CD8-positive, alpha-beta memory T cell (primary cell): ENCODE measurements at regions of chr3 and their contacts with region 1.

Region 1: DNA sequence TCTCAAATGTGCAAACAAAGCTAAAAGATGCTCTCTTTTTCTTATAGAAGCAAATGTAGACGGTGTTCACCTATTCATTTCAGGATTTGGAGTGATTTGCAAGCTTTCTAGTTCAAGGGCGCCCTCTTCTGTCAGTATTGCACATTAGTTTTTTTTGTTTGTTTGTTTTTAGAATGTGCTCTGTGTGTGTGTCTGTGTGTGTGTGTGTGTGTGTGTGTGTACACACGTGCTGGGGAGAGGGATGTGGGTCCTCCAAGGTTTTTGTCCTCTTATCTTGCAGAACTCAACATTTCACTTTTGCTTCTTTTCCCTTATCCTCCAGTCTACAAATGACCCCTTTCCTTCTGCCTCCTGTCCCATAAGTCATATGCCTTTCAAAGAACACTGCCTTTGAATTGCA is 23.5 kb downstream of the DNAH1 start:
- DNase-seq: peak; percentile 10 to 72 (median 60)
- H3K4me3 ChIP-seq: no peak overlapping the region
- H3K4me3 Mint-ChIP-seq: no peak overlapping the region
- H3K27ac ChIP-seq: no peak overlapping the region
- H3K27ac Mint-ChIP-seq: peak overlapping the region in 5 of 8 donors; percentile 1 to 62 (median 17)
- H3K4me1 ChIP-seq: no peaks in the 10 kb centered on the region
- H3K4me1 Mint-ChIP-seq: peaks cover 5 to 7% (median 6%) of the 10 kb centered on the region in 3 donors
- H3K27me3 ChIP-seq: no peaks in the 10 kb centered on the region
- H3K27me3 Mint-ChIP-seq: no peaks in the 10 kb centered on the region

Region 2: DNA sequence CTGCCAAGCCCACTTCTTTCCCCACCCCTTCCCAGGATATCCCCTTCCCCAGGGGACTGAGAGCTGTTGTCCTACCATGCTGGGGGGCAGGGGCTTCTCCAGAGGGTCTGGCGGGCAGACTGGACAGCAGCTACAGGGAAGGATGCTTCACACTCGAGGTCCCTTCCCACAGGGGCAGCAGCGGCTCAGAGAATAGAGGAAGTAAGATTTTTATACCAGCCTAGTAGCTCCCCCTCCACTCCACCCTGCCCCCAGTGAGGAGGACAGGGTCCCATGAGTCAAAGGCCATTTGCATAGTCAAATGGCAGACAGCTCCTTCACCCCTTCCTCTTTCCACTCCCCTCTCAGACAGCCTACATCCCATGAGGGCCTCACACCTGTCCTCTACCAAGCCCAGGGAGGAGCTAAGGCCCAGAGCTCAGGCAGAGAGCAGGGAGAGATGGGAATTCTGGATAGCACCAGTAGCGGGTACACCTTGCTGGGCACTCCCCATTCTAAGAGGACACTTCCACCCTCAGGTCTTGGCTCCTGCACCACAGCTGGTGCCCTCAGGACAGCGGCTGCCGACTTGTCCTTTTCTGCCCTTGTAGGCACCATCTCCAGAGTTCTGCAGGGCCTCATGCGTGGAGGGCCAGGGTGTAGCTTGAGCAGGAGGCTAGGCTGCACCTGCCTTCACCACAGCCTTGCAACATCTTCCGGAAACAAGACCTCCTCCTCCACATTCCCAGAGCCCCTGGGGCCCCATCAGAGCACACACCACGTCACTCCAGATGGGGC is 114.0 kb before region 1 on chr3 and contains the start of gene TLR9:
- CTCF ChIA-PET with region 1: interaction called, 115 read pairs
- POLR2A ChIA-PET with region 1: interaction called, 10 read pairs
- DNase-seq: peak in 1 of 5 donors; percentile 49
- H3K4me3 ChIP-seq: peak within 1 kb of the TSS; percentile 39
- H3K4me3 Mint-ChIP-seq: peak within 1 kb of the TSS in 6 of 7 donors; percentile 8 to 56 (median 33)
- H3K27ac ChIP-seq: no peak within 1 kb of the TSS
- H3K27ac Mint-ChIP-seq: peak within 1 kb of the TSS; percentile 56 to 91 (median 75)
- H3K4me1 ChIP-seq: peaks cover 64% of the 10 kb centered on the region
- H3K4me1 Mint-ChIP-seq: peaks cover 50 to 73% (median 50%) of the 10 kb centered on the region in 3 donors
- H3K27me3 ChIP-seq: no peaks in the 10 kb centered on the region
- H3K27me3 Mint-ChIP-seq: no peaks in the 10 kb centered on the region
- total RNA-seq, gene TLR9: 0.16 to 0.22 TPM

Region 3: DNA sequence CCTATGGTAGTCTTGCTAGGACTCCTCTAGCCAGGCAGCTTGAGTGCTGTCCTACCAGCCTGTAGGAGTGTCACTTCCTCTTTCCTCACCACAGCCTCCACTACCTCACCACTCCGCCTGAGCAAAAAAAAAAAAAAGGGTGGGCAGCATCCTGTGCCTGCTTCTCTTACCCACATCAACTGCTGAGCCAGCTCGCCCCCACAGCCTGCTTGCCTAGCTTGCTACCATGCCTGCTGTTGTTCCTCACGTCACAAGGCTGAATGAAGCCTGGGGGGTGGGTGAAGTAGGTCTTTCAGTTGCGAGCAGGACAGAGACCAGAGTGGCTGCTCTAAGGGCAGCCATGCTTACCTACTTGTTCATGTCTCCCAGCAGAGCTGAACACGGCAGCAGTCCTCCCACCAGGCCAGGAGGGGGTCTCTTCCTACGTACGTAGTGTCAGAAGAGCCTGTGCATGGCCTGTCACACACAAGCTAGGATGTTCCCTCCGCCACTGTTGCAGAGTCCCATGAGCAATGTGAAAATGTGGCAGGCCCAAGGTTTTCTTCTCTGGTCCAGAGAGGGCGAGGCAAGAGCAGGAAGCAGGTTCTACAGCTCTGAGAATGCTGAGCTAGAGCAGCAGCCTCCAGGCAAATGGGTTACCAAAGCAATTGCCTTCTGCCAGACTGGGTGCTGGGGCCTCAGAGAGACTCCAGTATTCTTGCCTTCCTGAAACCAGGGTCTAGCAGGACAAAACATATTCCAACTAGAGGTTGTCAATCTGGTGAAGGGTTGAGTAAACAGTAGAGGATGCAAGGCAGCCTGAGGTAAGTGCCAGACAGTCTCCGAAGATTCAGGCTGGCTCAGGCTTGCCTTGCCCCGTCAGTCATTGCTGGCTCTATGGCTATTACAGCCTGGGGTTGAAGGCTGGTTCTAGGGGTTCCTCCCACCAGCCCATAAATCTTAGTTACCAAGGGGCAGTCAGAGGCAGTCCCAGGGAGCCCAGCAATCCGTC is 86.0 kb before region 1 on chr3:
- CTCF ChIA-PET with region 1: interaction called, 22 read pairs
- POLR2A ChIA-PET with region 1: no interaction called
- DNase-seq: peak; percentile 70 to 95 (median 94)
- H3K4me3 ChIP-seq: peak overlapping the region; percentile 57
- H3K4me3 Mint-ChIP-seq: peak overlapping the region; percentile 76 to 92 (median 89)
- H3K27ac ChIP-seq: peak overlapping the region; percentile 77
- H3K27ac Mint-ChIP-seq: peak overlapping the region; percentile 95 to 100 (median 100)
- H3K4me1 ChIP-seq: peaks cover 93% of the 10 kb centered on the region
- H3K4me1 Mint-ChIP-seq: peaks cover 77 to 96% (median 93%) of the 10 kb centered on the region in 3 donors
- H3K27me3 ChIP-seq: no peaks in the 10 kb centered on the region
- H3K27me3 Mint-ChIP-seq: peaks cover 0 to 2% of the 10 kb centered on the region in 2 donors

Region 4: GRCh38 chr3:52291508-52292181 is 48.0 kb before region 1 on chr3:
- CTCF ChIA-PET with region 1: interaction called, 35 read pairs
- POLR2A ChIA-PET with region 1: no interaction called
- DNase-seq: peak in 4 of 5 donors; percentile 17 to 72 (median 48)
- H3K4me3 ChIP-seq: no peak overlapping the region
- H3K4me3 Mint-ChIP-seq: peak overlapping the region in 4 of 7 donors; percentile 30 to 78 (median 60)
- H3K27ac ChIP-seq: no peak overlapping the region
- H3K27ac Mint-ChIP-seq: peak overlapping the region in 4 of 8 donors; percentile 27 to 89 (median 46)
- H3K4me1 ChIP-seq: peaks cover 28% of the 10 kb centered on the region
- H3K4me1 Mint-ChIP-seq: peaks cover 31 to 46% (median 35%) of the 10 kb centered on the region in 3 donors
- H3K27me3 ChIP-seq: no peaks in the 10 kb centered on the region
- H3K27me3 Mint-ChIP-seq: peaks cover 0 to 3% of the 10 kb centered on the region in 2 donors